ENCODE measurements at regions of chr2 and their contacts with region 1.

Region 1: DNA sequence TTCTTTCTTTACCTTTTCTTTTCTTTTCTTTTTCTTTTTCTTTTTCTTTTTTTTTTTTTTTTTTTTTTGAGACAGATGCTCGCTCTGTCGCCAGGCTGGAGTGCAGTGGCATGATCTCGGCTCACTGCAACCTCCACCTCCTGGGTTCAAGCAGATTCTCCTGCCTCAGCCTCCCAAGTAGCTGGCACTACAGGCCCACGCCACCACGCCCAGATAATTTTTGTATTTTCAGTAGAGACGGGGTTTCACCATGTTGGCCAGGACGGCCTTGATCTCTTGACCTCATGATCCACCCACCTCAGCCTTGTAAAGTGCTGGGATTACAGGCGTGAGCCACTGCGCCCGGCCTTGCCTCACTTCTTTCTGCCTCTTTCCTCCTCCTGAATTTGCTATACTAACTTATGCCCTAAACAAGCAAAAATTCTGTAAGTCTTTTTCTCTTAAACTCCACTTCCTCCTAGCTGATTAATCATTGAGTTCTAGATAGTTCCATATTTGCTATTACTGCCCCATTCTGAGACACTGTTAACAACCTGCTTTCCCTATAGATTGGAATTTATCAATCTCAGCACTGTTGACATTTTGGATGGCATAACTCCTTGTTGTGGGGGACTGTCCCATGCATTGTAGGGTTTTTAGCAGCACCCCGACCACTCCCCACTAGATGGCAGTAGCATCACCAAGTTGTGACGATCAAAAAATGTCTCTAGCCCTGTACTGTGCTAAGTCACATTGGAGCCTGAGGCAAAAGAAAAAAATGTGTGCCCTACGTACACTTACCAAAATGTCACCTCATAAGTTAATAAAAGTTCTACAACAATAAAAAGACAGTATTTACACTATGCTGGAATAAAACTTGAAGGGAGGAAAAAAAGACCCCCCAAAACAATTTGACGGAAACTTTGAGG is 16.4 kb upstream of the THADA start:
- DNase-seq: peak; percentile 33 to 72
- ATAC-seq: peak; percentile 81 to 96 (median 90)
- H3K4me3 ChIP-seq: no peak overlapping the region
- H3K27ac ChIP-seq: no peak overlapping the region
- H3K4me1 ChIP-seq: no peaks in the 10 kb centered on the region
- H3K27me3 ChIP-seq: peaks cover 0 to 4% (median 0%) of the 10 kb centered on the region in 7 donors
- CTCF ChIP-seq: peak; percentile 60 to 86 (median 80)

Region 2: GRCh38 chr2:43312755-43313641 is 299.2 kb before region 1 on chr2:
- intact Hi-C with region 1: no loop called
- DNase-seq: no peak
- ATAC-seq: peak in 4 of 8 donors; percentile 37 to 65 (median 54)
- H3K4me3 ChIP-seq: no peak overlapping the region
- H3K27ac ChIP-seq: peak overlapping the region; percentile 14 to 79 (median 44)
- H3K4me1 ChIP-seq: peaks cover 0 to 40% (median 22%) of the 10 kb centered on the region in 9 donors
- H3K27me3 ChIP-seq: no peaks in the 10 kb centered on the region
- CTCF ChIP-seq: no peak

Region 3: GRCh38 chr2:43773876-43774613 is 161.8 kb after region 1 on chr2 and contains the start of gene DYNC2LI1:
- intact Hi-C with region 1: loop called in 2 of 10 experiments (anchors 10 kb)
- DNase-seq: peak; percentile 88 to 92
- ATAC-seq: peak; percentile 98 to 99 (median 99)
- H3K4me3 ChIP-seq: peak within 1 kb of the TSS; percentile 51 to 84 (median 72)
- H3K27ac ChIP-seq: peak within 1 kb of the TSS; percentile 36 to 88 (median 80)
- H3K4me1 ChIP-seq: peaks cover 0 to 10% (median 5%) of the 10 kb centered on the region in 9 donors
- H3K27me3 ChIP-seq: no peaks in the 10 kb centered on the region
- CTCF ChIP-seq: no peak
- total RNA-seq, gene DYNC2LI1: 4.8 to 13.8 (median 10.7) TPM

Region 4: GRCh38 chr2:43787895-43788294 is 175.7 kb after region 1 on chr2:
- intact Hi-C with region 1: loop called in 1 of 10 experiments (anchors 10 kb)
- DNase-seq: no peak
- ATAC-seq: no peak
- H3K4me3 ChIP-seq: no peak overlapping the region
- H3K27ac ChIP-seq: no peak overlapping the region
- H3K4me1 ChIP-seq: no peaks in the 10 kb centered on the region
- H3K27me3 ChIP-seq: no peaks in the 10 kb centered on the region
- CTCF ChIP-seq: no peak

Region 5: DNA sequence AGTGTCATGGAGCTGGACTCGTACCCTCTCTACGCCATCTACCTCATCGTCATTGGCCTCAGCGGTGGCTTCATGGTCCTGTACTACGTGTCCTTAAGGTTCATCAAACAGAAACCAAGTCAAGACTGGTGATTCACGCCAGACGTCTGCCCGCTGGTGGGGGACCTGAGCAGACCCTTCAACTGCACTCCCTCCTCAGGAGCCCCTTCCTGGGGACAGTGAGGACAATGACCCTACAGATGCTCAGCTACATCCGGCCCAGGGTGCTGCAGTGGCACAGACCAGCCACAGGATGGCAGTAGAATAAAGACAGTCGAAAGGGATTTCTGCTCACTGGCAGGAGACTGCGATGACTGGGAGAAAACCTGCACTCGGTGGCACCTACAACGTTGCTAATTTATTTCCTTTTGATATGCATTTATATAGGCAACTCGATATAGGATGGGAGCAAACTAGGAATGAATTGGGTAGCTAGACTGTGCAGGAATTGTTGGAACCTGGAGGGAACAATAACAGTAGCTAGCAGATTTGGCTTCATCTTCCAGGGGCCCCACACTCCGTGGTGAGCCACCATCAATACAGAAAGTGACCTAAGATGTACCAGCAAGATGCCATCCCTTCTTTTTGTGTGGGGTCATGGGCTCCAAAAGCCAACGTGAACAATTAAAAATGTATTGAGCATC is 265.7 kb after region 1 on chr2:
- intact Hi-C with region 1: loop called in 3 of 10 experiments (anchors 10 kb)
- DNase-seq: peak; percentile 36 to 38
- ATAC-seq: peak in 7 of 8 donors; percentile 53 to 70 (median 63)
- H3K4me3 ChIP-seq: no peak overlapping the region
- H3K27ac ChIP-seq: no peak overlapping the region
- H3K4me1 ChIP-seq: peaks cover 0 to 5% (median 0%) of the 10 kb centered on the region in 9 donors
- H3K27me3 ChIP-seq: peaks cover 0 to 28% (median 0%) of the 10 kb centered on the region in 7 donors
- CTCF ChIP-seq: peak; percentile 60 to 93 (median 82)

Region 6: DNA sequence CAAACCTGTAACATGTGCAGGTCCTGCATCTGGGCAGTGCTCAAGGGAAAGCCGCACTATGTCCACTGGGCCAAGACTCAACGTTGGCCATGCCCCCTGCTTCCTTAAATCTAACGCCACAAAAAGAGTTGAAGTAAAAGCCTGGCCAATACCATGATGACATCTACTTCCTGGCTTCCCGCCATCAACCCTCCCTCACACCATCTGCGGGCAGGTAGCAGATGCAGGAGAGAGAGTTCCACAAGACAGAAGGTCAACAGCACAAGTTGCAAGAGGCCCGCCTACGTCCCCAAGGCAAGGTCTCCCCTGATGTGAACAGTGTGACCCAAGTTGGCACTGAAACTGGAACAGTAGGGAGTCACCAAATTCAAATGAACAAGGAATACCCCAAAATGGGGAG is 274.9 kb after region 1 on chr2:
- intact Hi-C with region 1: loop called in 1 of 10 experiments (anchors 10 kb)
- DNase-seq: no peak
- ATAC-seq: no peak
- H3K4me3 ChIP-seq: no peak overlapping the region
- H3K27ac ChIP-seq: no peak overlapping the region
- H3K4me1 ChIP-seq: no peaks in the 10 kb centered on the region
- H3K27me3 ChIP-seq: no peaks in the 10 kb centered on the region
- CTCF ChIP-seq: no peak

Region 7: GRCh38 chr2:44004735-44005602 is 392.7 kb after region 1 on chr2:
- intact Hi-C with region 1: no loop called
- DNase-seq: no peak
- ATAC-seq: no peak
- H3K4me3 ChIP-seq: no peak overlapping the region
- H3K27ac ChIP-seq: no peak overlapping the region
- H3K4me1 ChIP-seq: peaks cover 0 to 6% (median 0%) of the 10 kb centered on the region in 9 donors
- H3K27me3 ChIP-seq: peaks cover 0 to 8% (median 0%) of the 10 kb centered on the region in 7 donors
- CTCF ChIP-seq: no peak